MCF 10A (cell line): ENCODE measurements at regions of chr9 and their contacts with region 1.

Region 1: GRCh38 chr9:36074870-36075532 is 38.3 kb downstream of the RECK start:
- DNase-seq: peak; percentile 89
- H3K4me3 Mint-ChIP-seq: no peak overlapping the region
- H3K27ac Mint-ChIP-seq: peak overlapping the region; percentile 33
- H3K4me1 Mint-ChIP-seq: peaks cover 19% of the 10 kb centered on the region
- H3K27me3 Mint-ChIP-seq: no peaks in the 10 kb centered on the region
- CTCF ChIP-seq: no peak

Region 2: DNA sequence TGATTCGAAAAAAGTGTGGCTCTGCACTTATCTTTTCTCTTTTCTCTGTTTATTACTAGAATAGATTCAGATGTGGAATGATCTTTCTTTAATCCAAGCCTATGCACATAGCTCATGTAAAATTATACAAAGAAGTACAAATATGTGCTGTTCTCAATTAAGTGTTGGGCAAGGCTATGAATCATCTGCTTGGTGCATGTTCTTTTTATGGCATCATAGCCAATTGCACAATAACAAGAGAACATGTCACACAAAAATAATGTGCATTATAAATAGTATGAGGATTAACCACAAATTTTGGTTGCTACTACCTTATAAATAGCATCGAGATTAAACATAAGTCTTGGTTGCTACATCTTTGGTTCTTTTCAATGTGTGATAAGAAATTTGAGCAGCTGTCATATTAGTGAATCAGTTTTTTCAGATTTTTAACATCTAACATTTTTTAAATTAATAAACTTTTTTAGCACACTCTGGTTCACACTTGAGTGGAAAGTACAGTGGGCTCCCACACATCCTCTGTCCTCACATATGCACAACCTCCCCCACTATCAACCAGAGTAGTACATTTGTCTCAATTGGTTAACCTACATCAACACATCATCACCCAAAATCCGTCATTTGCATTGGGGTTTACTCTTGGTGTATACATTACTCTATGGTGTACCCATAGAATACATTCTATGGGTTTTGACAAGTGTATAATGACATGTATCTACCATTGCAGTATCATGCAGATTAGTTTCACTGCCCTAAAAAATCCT is 45.1 kb before region 1 on chr9:
- CTCF ChIA-PET with region 1: interaction called, 5 read pairs
- POLR2A ChIA-PET with region 1: interaction called, 20 read pairs
- intact Hi-C with region 1: no loop called
- DNase-seq: peak; percentile 94
- H3K4me3 Mint-ChIP-seq: no peak overlapping the region
- H3K27ac Mint-ChIP-seq: peak overlapping the region; percentile 83
- H3K4me1 Mint-ChIP-seq: peaks cover 19% of the 10 kb centered on the region
- H3K27me3 Mint-ChIP-seq: peaks cover 19% of the 10 kb centered on the region
- CTCF ChIP-seq: no peak

Region 3: GRCh38 chr9:36036780-36037548 is 38.0 kb before region 1 on chr9 and contains the start of gene RECK:
- CTCF ChIA-PET with region 1: interaction called, 4 read pairs
- POLR2A ChIA-PET with region 1: interaction called, 16 read pairs
- intact Hi-C with region 1: no loop called
- DNase-seq: peak; percentile 85
- H3K4me3 Mint-ChIP-seq: peak within 1 kb of the TSS; percentile 76
- H3K27ac Mint-ChIP-seq: peak within 1 kb of the TSS; percentile 50
- H3K4me1 Mint-ChIP-seq: peaks cover 25% of the 10 kb centered on the region
- H3K27me3 Mint-ChIP-seq: peaks cover 12% of the 10 kb centered on the region
- CTCF ChIP-seq: no peak
- total RNA-seq, gene RECK: 3.3 and 3.7 TPM in 2 replicates

Region 4: DNA sequence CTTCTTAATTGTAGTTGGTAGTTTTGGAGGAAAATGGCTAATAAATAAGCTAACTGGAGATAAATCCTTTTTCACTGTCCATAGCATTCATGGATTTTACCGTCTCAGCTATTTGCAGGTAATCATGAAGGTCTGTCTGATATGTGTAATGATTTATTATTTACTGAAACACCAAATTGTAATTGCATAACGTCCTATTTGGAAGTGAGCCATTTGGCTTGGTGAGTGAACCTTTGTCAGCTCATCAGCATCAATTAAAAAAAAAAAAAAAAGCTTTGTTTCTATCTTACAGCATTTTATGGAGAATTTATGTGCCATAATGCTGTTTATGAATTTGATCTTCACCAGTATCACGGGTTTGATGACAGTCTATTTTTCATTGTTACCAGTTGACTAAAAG is 18.1 kb before region 1 on chr9:
- CTCF ChIA-PET with region 1: no interaction called
- POLR2A ChIA-PET with region 1: interaction called, 14 read pairs
- intact Hi-C with region 1: no loop called
- DNase-seq: peak; percentile 56
- H3K4me3 Mint-ChIP-seq: no peak overlapping the region
- H3K27ac Mint-ChIP-seq: no peak overlapping the region
- H3K4me1 Mint-ChIP-seq: no peaks in the 10 kb centered on the region
- H3K27me3 Mint-ChIP-seq: no peaks in the 10 kb centered on the region
- CTCF ChIP-seq: no peak